GM12878 (cell line): ENCODE measurements at regions of chr4 and their contacts with region 1.

Region 1: GRCh38 chr4:39697740-39698423 is at the start of gene UBE2K:
- DNase-seq: no peak
- ATAC-seq: peak; percentile 94
- H3K4me3 ChIP-seq: peak within 1 kb of the TSS; percentile 96
- H3K27ac ChIP-seq: peak within 1 kb of the TSS; percentile 92
- H3K4me1 ChIP-seq: peaks cover 4% of the 10 kb centered on the region
- H3K27me3 ChIP-seq: no peaks in the 10 kb centered on the region
- CTCF ChIP-seq: no peak
- EP300 ChIP-seq: no peak
- POLR2A ChIP-seq: peak; percentile 98
- RAD21 ChIP-seq: no peak
- polyA plus RNA-seq, gene UBE2K: 54.3 to 96.4 TPM

Region 2: DNA sequence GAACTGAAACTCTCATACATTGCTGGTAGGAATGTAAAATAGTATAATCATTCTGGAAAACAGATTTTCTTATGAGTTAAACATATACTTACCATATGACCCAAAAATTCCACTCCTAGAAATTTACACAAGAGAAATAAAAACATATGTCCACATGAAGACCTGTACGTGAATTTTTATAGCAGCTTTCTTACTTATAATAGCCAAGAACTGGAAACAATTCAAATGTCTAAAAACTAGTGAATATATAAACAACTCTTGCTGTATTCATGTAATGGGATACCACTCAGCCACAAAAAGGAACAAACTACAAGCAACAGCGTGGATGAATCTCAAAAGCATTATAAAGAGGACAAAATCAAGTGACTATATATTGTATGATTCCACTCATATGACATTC is 693.1 kb before region 1 on chr4:
- CTCF ChIA-PET with region 1: no interaction called
- POLR2A ChIA-PET with region 1: no interaction called
- RAD21 ChIA-PET with region 1: no interaction called
- SMC1A ChIA-PET with region 1: no interaction called
- in situ Hi-C with region 1: no loop called
- intact Hi-C with region 1: no loop called
- DNase-seq: no peak
- ATAC-seq: no peak
- H3K4me3 ChIP-seq: no peak overlapping the region
- H3K27ac ChIP-seq: no peak overlapping the region
- H3K4me1 ChIP-seq: no peaks in the 10 kb centered on the region
- H3K27me3 ChIP-seq: no peaks in the 10 kb centered on the region
- CTCF ChIP-seq: no peak
- EP300 ChIP-seq: no peak
- POLR2A ChIP-seq: no peak
- RAD21 ChIP-seq: no peak

Region 3: DNA sequence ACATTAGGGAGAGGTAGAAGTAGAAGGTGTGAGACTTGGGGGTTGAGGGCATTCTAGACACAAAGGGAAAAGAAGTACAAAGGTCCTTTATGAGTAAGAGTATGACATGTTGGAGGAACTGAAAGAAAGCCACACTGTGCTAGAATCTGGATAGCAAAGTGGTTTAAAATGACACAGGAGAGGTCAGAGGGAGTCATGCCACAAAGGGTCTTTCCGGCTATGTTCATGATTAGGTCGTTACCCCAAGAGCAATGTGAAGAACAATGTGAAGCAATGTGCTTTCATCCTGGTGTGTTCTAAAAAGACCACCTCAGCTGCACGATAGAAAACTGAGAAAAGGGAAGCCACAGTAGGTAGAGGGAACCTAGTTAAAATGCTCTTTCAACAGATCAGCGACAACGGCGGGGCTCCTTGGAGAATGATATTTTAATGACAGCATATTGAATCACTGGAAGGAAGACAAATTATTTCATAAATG is 88.4 kb before region 1 on chr4:
- CTCF ChIA-PET with region 1: no interaction called
- POLR2A ChIA-PET with region 1: interaction called, 3 read pairs
- RAD21 ChIA-PET with region 1: interaction called, 4 read pairs
- SMC1A ChIA-PET with region 1: no interaction called
- in situ Hi-C with region 1: no loop called
- intact Hi-C with region 1: loop called (anchors 5 kb)
- DNase-seq: peak; percentile 96
- ATAC-seq: peak; percentile 91
- H3K4me3 ChIP-seq: 0 out of 2 replicates have a peak overlapping the region, but pooled peaks have one; percentile 39
- H3K27ac ChIP-seq: peak overlapping the region; percentile 80
- H3K4me1 ChIP-seq: peaks cover 49% of the 10 kb centered on the region
- H3K27me3 ChIP-seq: no peaks in the 10 kb centered on the region
- CTCF ChIP-seq: no peak
- EP300 ChIP-seq: peak; percentile 97 to 100
- POLR2A ChIP-seq: 0 out of 2 replicates have a peak, but pooled peaks have one; percentile 29
- RAD21 ChIP-seq: no peak; the same call in 1 of the 2 replicates

Region 4: DNA sequence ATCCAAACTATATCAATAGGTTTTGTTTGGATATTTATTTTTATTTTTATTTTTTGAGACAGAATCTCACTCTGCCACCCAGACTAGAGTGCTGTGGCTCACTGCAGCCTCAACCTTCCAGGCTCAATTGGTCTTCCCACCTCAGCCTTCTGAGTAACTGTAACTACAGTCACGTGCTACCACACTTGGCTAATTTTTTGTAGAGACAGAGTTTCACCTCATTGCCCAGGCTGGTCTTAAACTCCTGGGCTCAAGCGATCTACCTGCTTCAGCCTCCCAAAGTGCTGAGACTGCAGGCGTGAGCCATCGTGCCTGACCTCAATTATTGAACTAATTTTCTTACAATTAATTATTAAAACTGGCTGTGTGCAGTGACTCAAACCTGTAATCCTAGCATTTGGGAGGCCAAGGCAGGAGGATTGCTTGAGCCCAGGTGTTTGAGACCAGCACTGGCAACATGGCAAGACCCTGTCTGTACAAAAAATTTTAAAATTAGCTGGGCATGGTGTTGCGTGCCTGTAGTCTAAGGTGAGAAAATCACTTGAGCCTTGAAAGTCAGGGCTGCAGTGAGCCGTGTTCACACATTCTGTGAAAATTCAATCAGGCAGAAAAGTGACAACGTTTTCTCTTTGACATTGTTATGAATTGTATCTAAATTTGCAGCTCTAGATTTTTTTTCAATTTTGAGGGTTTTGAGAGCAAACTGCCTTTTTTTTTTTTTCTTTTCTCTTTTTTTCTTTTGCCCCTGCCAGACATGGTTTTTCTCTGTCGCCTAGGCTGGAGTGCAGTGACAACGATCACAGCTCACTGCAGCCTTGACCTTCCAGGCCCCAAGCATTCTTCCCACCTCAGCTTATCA is 66.1 kb after region 1 on chr4:
- CTCF ChIA-PET with region 1: no interaction called
- POLR2A ChIA-PET with region 1: interaction called, 5 read pairs
- RAD21 ChIA-PET with region 1: interaction called, 16 read pairs
- SMC1A ChIA-PET with region 1: interaction called, 5 read pairs
- in situ Hi-C with region 1: no loop called
- intact Hi-C with region 1: loop called (anchors 5 kb)
- DNase-seq: peak; percentile 66
- ATAC-seq: peak; percentile 87
- H3K4me3 ChIP-seq: no peak overlapping the region
- H3K27ac ChIP-seq: peak overlapping the region; percentile 61
- H3K4me1 ChIP-seq: peaks cover 19% of the 10 kb centered on the region
- H3K27me3 ChIP-seq: no peaks in the 10 kb centered on the region
- CTCF ChIP-seq: no peak
- EP300 ChIP-seq: peak; percentile 39 to 77; a peak in 2 of 4 replicates
- POLR2A ChIP-seq: no peak
- RAD21 ChIP-seq: no peak

Region 5: DNA sequence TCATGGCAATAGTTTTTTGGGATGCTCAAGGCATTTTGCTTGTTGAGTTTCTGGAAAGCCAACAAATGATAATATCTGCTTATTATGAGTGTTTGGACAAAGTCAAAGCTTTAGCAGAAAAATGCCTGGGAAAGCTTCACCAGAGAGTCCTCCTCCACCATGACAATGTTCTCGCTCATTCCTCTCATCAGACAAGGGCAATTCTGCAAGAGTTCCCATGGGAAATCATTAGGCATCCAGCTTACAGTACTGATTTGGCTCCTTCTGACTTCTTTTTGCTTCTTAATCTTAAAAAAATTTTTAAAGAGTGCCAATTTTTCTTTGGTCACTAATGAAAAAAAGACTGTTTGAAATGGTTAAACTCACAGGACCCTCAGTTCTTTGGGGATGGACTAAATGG is 136.4 kb after region 1 on chr4:
- CTCF ChIA-PET with region 1: no interaction called
- POLR2A ChIA-PET with region 1: no interaction called
- RAD21 ChIA-PET with region 1: interaction called, 4 read pairs
- SMC1A ChIA-PET with region 1: interaction called, 3 read pairs
- in situ Hi-C with region 1: no loop called
- intact Hi-C with region 1: loop called (anchors 10 kb)
- DNase-seq: no peak
- ATAC-seq: no peak
- H3K4me3 ChIP-seq: no peak overlapping the region
- H3K27ac ChIP-seq: no peak overlapping the region
- H3K4me1 ChIP-seq: no peaks in the 10 kb centered on the region
- H3K27me3 ChIP-seq: no peaks in the 10 kb centered on the region
- CTCF ChIP-seq: no peak
- EP300 ChIP-seq: no peak
- POLR2A ChIP-seq: no peak
- RAD21 ChIP-seq: no peak

Region 6: GRCh38 chr4:40908702-40909362 is 1211.0 kb after region 1 on chr4:
- CTCF ChIA-PET with region 1: no interaction called
- POLR2A ChIA-PET with region 1: no interaction called
- RAD21 ChIA-PET with region 1: no interaction called
- SMC1A ChIA-PET with region 1: no interaction called
- in situ Hi-C with region 1: no loop called
- intact Hi-C with region 1: no loop called
- DNase-seq: peak; percentile 40
- ATAC-seq: peak; percentile 99
- H3K4me3 ChIP-seq: no peak overlapping the region
- H3K27ac ChIP-seq: no peak overlapping the region
- H3K4me1 ChIP-seq: peaks cover 4% of the 10 kb centered on the region; the same call in 1 of the 2 replicates
- H3K27me3 ChIP-seq: no peaks in the 10 kb centered on the region
- CTCF ChIP-seq: peak; percentile 92 to 97 (median 93)
- EP300 ChIP-seq: no peak
- POLR2A ChIP-seq: no peak
- RAD21 ChIP-seq: peak; percentile 82